PC-9 (cell line): ENCODE measurements at regions of chr6 and their contacts with region 1.

Region 1: DNA sequence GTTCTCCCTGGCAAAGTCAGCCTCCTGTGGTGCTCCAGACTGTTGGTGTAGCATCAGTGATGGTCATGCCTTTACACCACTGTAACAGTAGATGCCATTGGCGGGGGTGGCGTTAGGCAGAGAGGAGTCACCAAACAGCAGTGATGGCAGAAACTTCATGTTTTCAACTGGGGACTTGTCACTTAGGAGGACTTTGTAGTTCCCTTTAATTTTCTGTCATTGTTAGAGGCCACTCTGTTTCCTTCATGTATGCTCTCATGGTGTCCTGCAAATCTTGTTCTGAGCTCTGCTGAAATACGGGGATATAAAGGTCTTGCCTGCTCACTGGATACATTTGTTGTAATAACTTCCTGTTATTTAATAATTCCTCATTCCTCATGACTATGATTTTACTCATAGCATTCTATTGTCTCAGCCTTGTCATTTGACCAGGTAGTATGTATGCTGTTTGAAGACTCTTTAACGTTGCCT is 4.6 kb downstream of the MAP3K4 start:
- DNase-seq: peak in 1 of 2 experiments; percentile 45
- H3K4me3 ChIP-seq: no peak overlapping the region
- H3K27ac ChIP-seq: no peak overlapping the region
- H3K4me1 ChIP-seq: no peaks in the 10 kb centered on the region
- H3K27me3 ChIP-seq: no peaks in the 10 kb centered on the region
- CTCF ChIP-seq: no peak

Region 2: DNA sequence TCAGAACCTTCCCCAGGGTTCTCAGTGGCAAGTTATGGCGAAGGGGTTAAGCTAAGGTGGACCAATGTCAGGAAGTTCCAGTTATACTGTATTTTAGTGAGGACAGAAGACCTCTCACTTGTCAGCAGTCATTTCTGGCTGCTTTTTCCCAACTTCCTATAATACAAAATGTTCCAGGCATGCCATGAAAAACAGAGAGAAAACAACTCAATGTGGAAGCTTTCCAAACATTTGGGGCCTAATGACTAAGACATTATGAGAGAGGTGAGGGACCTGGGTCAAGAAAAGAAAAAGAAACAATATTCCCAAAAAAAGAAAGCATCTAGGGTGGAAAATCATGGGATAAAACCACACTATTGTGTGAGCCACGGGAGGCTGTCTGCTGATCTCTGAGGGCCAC is 104.5 kb before region 1 on chr6:
- CTCF ChIA-PET with region 1: no interaction called
- POLR2A ChIA-PET with region 1: no interaction called
- intact Hi-C with region 1: no loop called
- DNase-seq: no peak
- H3K4me3 ChIP-seq: no peak overlapping the region
- H3K27ac ChIP-seq: no peak overlapping the region
- H3K4me1 ChIP-seq: no peaks in the 10 kb centered on the region
- H3K27me3 ChIP-seq: peaks cover 9% of the 10 kb centered on the region
- CTCF ChIP-seq: no peak

Region 3: GRCh38 chr6:160972111-160972510 is 24.1 kb before region 1 on chr6:
- CTCF ChIA-PET with region 1: no interaction called
- POLR2A ChIA-PET with region 1: no interaction called
- intact Hi-C with region 1: no loop called
- DNase-seq: no peak
- H3K4me3 ChIP-seq: no peak overlapping the region
- H3K27ac ChIP-seq: no peak overlapping the region
- H3K4me1 ChIP-seq: no peaks in the 10 kb centered on the region
- H3K27me3 ChIP-seq: peaks cover 17% of the 10 kb centered on the region
- CTCF ChIP-seq: no peak

Region 4: DNA sequence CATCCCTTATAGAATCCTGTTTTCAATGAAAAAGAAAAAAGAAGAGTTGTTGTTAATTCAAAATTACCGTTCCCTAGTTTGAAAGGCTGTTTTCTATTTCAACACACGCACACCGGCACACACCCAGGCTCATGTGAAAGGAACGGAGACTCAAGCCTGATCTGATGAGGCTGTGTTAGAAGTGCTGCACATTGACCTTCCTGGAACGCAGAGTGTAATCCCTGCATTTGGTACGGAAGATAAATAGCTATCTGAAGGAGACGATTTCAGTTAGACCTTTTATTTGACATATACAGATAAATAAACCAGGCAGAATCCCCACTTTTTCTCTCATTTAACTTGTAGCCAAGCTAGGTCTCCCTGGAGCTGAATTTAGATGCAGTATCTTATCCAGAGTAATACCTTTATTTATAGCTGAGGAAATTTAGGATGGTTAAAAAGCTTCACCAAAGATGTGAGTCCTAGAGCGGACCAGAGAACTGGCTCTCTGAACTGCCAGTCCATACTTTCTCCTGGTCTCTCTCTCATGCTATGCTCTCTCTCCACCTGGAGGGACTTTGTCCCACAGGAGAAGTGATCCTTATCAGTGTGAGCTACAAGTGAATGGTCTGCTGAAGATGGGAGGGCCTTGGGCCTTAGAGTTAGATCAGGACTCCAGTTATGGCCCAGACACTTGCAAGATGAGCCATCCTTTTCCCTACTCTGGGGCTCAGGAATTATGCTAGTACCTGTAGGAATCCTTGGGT is 26.0 kb after region 1 on chr6:
- CTCF ChIA-PET with region 1: no interaction called
- POLR2A ChIA-PET with region 1: no interaction called
- intact Hi-C with region 1: loop called (anchors 1 kb)
- DNase-seq: no peak
- H3K4me3 ChIP-seq: no peak overlapping the region
- H3K27ac ChIP-seq: no peak overlapping the region
- H3K4me1 ChIP-seq: no peaks in the 10 kb centered on the region
- H3K27me3 ChIP-seq: no peaks in the 10 kb centered on the region
- CTCF ChIP-seq: no peak